ENCODE measurements at regions of chr7 and their contacts with region 1.

Region 1: GRCh38 chr7:143240291-143241168 is 18.7 kb downstream of the TAS2R40 start:
- DNase-seq: peak; percentile 86
- ATAC-seq: peak; percentile 76
- H3K4me3 Mint-ChIP-seq: no peak overlapping the region
- H3K27ac Mint-ChIP-seq: peak overlapping the region; percentile 62
- H3K4me1 Mint-ChIP-seq: peaks cover 51% of the 10 kb centered on the region
- H3K27me3 Mint-ChIP-seq: peaks cover 16% of the 10 kb centered on the region

Region 2: GRCh38 chr7:143229054-143229790 is 11.3 kb before region 1 on chr7:
- CTCF ChIA-PET with region 1: interaction called, 10 read pairs
- DNase-seq: no peak
- ATAC-seq: no peak
- H3K4me3 Mint-ChIP-seq: no peak overlapping the region
- H3K27ac Mint-ChIP-seq: no peak overlapping the region
- H3K4me1 Mint-ChIP-seq: no peaks in the 10 kb centered on the region
- H3K27me3 Mint-ChIP-seq: peaks cover 21% of the 10 kb centered on the region

Region 3: GRCh38 chr7:143279186-143280098 is 38.9 kb after region 1 on chr7:
- CTCF ChIA-PET with region 1: interaction called, 18 read pairs
- DNase-seq: no peak
- ATAC-seq: peak; percentile 74
- H3K4me3 Mint-ChIP-seq: peak overlapping the region; percentile 62
- H3K27ac Mint-ChIP-seq: peak overlapping the region; percentile 81
- H3K4me1 Mint-ChIP-seq: peaks cover 36% of the 10 kb centered on the region
- H3K27me3 Mint-ChIP-seq: no peaks in the 10 kb centered on the region

Region 4: GRCh38 chr7:143299840-143300239 is 59.3 kb after region 1 on chr7:
- CTCF ChIA-PET with region 1: interaction called, 88 read pairs
- DNase-seq: peak; percentile 70
- ATAC-seq: peak; percentile 88
- H3K4me3 Mint-ChIP-seq: no peak overlapping the region
- H3K27ac Mint-ChIP-seq: peak overlapping the region; percentile 25
- H3K4me1 Mint-ChIP-seq: peaks cover 45% of the 10 kb centered on the region
- H3K27me3 Mint-ChIP-seq: no peaks in the 10 kb centered on the region

Region 5: GRCh38 chr7:143334244-143334643 is 93.7 kb after region 1 on chr7:
- CTCF ChIA-PET with region 1: interaction called, 12 read pairs
- DNase-seq: no peak
- ATAC-seq: no peak
- H3K4me3 Mint-ChIP-seq: no peak overlapping the region
- H3K27ac Mint-ChIP-seq: no peak overlapping the region
- H3K4me1 Mint-ChIP-seq: no peaks in the 10 kb centered on the region
- H3K27me3 Mint-ChIP-seq: peaks cover 36% of the 10 kb centered on the region

Region 6: GRCh38 chr7:143372070-143372469 is 131.5 kb after region 1 on chr7:
- CTCF ChIA-PET with region 1: interaction called, 20 read pairs
- DNase-seq: peak; percentile 67
- ATAC-seq: peak; percentile 46
- H3K4me3 Mint-ChIP-seq: no peak overlapping the region
- H3K27ac Mint-ChIP-seq: peak overlapping the region; percentile 38
- H3K4me1 Mint-ChIP-seq: peaks cover 50% of the 10 kb centered on the region
- H3K27me3 Mint-ChIP-seq: no peaks in the 10 kb centered on the region

Region 7: DNA sequence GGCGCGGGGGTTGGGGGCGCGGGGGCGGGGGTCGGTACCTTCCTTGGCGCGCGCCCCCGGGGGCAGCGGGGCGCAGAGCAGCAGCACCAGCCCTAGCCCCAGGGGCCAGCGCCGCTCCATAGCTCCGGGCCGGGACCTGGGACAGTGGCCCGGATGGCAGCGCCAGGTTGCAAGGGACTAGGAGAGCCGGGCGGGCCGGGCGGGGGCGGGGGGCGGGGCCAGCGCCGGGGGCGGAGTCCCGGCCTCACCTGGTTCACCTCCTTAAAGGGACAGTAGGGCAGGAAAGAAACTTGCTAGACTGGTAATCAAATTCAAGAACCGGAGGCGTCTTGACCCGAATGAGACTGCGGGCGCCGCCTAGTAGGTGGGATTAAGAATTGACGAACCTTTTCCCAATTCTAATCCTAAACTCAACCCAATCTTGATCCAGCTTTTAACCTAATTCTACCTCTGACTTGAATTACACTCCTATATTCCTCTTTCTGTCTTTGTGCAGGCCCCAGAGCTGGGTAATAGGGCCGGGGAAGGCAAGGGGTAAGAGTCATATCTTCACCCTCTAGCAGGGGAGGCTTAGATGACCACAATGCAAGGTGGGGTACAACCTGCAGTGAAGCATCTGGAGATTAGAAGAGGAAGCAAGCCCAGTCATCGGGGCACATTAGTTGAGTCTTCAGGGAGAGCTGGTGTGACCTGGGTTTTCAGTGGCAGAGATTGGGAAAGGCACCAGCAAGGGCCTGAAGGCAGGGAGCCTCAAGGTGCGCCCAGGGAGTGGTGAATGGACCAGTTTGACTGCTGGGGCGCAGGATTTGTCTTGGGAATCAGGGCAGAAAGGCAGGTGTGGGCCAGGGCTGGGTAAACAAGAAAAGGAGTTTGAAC is 168.4 kb after region 1 on chr7 and contains the start of gene EPHA1:
- CTCF ChIA-PET with region 1: interaction called, 51 read pairs
- DNase-seq: no peak
- ATAC-seq: peak; percentile 64
- H3K4me3 Mint-ChIP-seq: peak within 1 kb of the TSS; percentile 65
- H3K27ac Mint-ChIP-seq: peak within 1 kb of the TSS; percentile 34
- H3K4me1 Mint-ChIP-seq: peaks cover 31% of the 10 kb centered on the region
- H3K27me3 Mint-ChIP-seq: peaks cover 6% of the 10 kb centered on the region
- total RNA-seq, gene EPHA1: 0.47 to 1.6 TPM

Measured in activated CD8-positive, alpha-beta memory T cell treated with anti-CD3 and anti-CD28 coated beads, Interleukin-2, amount 10 ng/mL, durations not matched to agents 7 days and 5 days (primary cell).